Calu3 (cell line): ENCODE measurements at regions of chr9 and their contacts with region 1.

Region 1: DNA sequence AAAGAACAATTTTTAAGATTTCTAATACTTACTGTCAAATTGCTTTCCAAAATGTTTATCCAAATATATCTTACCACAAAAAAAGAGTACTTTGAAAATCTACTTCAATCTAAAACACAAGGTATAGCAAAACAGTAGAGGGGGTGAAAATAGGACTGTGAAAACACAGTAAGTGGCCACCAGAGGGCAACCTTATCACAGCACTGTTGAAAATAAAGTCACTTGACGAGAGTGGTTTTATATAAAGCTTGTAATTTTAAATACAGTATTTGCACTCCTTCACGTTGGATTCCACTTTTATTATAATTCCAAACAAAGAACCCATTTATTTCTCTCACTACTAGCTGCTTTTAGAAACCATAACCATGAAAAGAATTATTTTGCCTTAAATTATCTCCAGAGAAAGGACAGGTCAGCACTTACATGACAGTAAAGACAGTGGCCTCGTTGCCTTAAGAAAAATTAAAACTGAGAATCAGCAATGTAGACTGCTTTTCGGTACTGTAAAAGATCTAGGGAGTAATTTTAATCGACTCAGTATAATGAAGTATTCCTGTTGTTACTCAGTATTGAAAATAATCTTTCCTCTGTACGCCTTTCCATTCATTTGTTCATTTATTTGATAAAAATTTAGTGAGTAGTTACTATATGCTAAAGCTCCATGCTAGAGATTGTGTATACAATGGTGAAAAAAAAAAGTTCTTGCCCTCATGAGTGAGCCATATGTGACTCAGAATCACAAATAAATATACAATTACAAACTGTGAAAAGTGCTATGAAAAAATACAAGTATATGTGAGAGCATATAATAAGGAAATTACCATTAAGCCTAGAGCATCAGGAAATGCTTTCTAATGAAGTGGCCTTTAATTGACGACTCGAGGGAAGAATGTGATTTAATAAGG is 40.0 kb upstream of the CDK5RAP2 start:
- DNase-seq: peak; percentile 54
- H3K4me3 Mint-ChIP-seq: no peak overlapping the region
- H3K27ac Mint-ChIP-seq: no peak overlapping the region
- H3K4me1 Mint-ChIP-seq: no peaks in the 10 kb centered on the region
- H3K27me3 Mint-ChIP-seq: no peaks in the 10 kb centered on the region
- CTCF ChIP-seq: peak; percentile 24

Region 2: DNA sequence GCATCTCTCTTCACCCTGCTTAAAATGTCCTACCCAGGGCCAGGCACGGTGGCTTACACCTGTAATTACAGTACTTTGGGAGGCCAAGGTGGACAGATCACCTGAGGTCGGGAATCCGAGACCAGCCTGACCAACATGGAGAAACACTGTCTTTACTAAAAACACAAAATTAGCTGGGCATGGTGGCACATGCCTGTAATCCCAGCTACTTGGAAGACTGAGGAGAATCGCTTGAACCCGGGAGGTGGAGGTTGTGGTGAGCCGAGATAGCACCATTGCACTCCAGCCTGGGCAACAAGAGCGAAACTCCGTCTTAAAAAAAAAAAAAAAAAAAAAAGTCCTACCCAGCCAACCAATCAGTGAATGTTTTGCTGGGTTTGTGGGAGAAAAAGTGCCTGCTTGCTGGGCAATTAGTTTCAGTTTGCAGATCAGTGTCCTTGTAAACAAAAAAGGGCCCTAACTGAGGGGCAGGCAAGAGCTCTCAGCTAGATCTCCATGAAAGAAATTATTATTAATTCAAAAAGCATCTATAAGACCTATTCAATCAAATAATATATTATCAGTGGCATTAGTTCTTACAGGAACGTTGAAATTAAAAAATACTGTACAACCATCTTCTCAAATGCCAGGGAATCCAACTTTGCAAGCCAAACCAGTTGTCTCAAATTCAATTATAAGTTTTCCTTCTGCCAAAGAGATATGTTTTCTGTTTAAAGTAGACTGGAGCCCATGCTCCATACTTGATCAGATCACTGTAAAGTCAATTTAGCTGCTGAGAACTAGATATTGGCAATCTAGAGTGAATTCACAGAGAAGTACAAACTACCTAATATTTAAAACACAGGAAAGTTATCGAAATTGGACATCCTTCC is 90.3 kb after region 1 on chr9:
- CTCF ChIA-PET with region 1: interaction called, 7 read pairs
- intact Hi-C with region 1: loop called (anchors 2 kb)
- DNase-seq: no peak
- H3K4me3 Mint-ChIP-seq: peak overlapping the region; percentile 87
- H3K27ac Mint-ChIP-seq: peak overlapping the region; percentile 50
- H3K4me1 Mint-ChIP-seq: peaks cover 23% of the 10 kb centered on the region
- H3K27me3 Mint-ChIP-seq: no peaks in the 10 kb centered on the region
- CTCF ChIP-seq: no peak

Region 3: DNA sequence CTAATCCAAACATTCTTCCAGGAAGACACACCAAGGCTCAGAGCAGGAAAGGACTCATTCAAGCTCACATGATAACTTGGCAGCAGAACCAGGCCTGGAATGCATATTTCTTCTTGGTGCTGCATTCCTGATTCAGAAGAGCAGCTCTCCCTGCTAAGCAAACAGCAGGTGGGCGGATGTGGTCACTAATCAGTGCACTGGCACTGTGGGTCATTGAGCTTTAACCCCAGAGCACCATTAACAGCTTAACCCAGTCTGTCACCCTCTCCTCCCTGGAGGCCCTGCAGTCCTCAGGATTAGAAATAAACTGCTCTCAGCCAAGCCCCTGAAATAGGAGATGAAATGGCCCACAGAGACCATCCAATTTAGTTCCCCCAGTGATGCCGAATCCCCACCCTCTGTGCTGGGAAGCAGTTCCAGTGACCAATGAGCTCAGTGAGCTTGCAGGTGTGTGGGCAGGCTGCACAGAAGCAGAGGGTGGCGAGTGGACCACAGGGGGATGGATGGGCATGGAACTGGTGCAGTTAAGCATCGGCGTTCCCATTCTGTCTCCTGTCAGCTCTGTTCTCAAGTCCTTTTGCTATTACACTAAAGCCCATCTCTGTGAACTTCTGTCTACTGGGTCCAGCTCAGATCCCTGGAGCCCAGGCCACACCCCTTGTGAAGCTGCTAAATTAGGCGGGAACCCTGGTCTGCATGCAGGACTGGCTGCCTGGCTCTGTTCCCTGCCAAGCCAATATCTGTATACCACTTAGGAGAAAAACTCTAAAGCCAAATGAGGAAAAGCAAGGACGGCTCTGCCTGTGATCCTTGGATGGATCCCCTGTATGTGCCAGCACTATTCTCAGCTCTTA is 110.9 kb after region 1 on chr9:
- CTCF ChIA-PET with region 1: no interaction called
- intact Hi-C with region 1: loop called (anchors 5 kb)
- DNase-seq: peak; percentile 70
- H3K4me3 Mint-ChIP-seq: no peak overlapping the region
- H3K27ac Mint-ChIP-seq: no peak overlapping the region
- H3K4me1 Mint-ChIP-seq: peaks cover 37% of the 10 kb centered on the region
- H3K27me3 Mint-ChIP-seq: peaks cover 13% of the 10 kb centered on the region
- CTCF ChIP-seq: no peak

Region 4: DNA sequence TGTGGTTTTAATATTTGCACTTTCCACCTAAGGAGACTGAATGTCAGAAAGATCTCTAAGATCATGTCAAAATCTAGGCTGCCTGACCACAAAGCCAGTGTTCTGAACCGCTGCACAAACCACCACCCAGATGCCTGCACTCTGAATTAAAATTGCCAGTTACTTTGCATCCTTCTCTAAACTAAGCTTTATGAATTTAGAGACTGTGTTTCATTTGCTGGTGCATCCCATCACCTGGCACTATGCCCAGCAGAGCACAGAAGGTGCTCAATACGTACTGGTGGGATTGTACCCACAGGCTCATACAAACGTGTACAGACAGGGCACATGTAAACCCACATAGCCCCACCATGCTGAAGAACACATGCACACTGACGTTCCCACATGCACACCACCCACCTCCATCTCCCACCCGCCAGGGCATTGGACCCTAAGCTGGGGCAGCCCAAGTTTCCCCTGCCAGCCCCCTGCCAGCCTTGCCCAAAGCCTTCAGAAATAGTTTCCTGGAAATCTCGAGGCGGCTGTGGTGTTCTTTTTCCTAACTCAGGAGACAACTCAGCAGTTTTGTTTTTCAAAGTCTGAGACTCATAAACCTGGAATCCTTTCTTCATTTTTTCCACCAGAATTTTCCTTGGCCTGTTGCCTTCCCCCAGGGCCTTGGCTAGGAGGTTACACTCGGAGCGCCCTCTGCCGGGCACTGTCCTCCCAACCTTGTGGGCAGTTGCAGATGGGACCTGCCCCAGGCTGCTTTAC is 316.2 kb after region 1 on chr9:
- CTCF ChIA-PET with region 1: no interaction called
- intact Hi-C with region 1: loop called (anchors 5 kb)
- DNase-seq: peak; percentile 89
- H3K4me3 Mint-ChIP-seq: no peak overlapping the region
- H3K27ac Mint-ChIP-seq: no peak overlapping the region
- H3K4me1 Mint-ChIP-seq: peaks cover 9% of the 10 kb centered on the region
- H3K27me3 Mint-ChIP-seq: peaks cover 21% of the 10 kb centered on the region
- CTCF ChIP-seq: peak; percentile 60

Region 5: DNA sequence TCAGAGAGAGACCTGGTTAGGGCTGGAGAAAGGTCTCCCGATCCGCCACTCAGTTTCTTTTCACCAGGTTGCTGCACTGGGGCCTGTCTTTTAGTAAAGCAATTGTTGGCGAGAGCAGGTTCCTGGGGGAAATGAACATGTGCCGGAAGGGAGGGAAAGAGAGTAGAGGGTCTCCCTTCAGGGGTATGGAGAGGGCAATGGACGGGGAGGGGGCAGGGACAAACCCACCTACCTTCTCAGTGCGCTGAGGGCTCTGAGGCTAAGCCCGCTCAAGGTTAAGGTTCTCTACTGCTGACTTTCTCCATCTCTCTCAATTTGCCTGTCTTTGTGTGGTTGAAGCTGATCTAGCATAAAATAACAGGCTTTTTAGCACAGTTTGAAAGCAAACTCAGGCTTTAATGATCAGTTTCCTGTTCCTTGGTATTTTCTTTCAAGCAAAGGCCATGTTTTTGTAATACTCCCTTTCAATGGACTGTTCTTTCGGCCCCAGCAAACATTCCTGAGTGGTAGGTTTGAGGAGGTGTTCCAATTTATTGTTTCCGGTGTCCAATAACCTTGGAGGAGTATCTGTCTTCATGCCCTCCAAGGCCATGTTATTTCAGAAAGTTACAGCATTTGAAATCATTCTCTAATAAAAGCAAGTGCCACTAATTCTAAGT is 332.1 kb after region 1 on chr9:
- CTCF ChIA-PET with region 1: no interaction called
- intact Hi-C with region 1: no loop called
- DNase-seq: no peak
- H3K4me3 Mint-ChIP-seq: no peak overlapping the region
- H3K27ac Mint-ChIP-seq: no peak overlapping the region
- H3K4me1 Mint-ChIP-seq: no peaks in the 10 kb centered on the region
- H3K27me3 Mint-ChIP-seq: no peaks in the 10 kb centered on the region
- CTCF ChIP-seq: no peak